A673 (cell line): ENCODE measurements at regions of chr18 and their contacts with region 1.

Region 1: DNA sequence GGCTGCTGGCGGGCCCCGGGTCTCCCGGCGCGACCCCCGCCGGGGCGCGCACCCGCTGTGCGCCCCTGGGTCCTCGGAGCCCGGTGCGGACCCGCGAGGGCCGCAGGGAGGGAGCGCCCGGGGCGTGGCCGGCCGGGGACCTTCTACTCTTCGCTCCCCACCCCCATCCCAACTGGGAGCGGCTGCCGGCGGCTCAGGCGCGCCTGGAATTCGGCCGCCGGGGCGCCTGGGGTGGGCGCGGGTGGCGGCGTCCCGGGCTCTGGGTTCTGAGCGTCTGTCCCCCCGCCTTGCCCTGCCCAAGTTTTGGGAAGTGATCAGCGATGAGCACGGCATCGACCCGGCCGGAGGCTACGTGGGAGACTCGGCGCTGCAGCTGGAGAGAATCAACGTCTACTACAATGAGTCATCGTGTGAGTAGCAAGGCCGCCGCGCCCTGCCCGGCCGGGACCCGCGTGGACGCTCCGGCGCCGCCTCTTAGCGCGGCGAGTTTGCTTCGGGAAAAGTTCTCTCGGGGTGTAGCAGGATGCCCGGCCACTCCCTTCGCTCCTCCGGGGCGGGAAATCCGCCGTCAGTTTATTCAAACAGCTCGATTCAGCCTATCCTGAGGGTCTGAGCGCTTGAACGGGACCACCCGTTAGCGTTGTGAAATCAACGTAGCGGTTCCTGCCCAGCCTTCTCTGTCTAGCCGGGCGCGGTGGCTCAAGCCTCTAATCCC is 502 bp downstream of the TUBB6 start:
- DNase-seq: peak; percentile 86
- H3K4me3 ChIP-seq: peak overlapping the region; percentile 97
- H3K27ac ChIP-seq: peak overlapping the region; percentile 82
- H3K4me1 ChIP-seq: peaks cover 12% of the 10 kb centered on the region
- H3K27me3 ChIP-seq: no peaks in the 10 kb centered on the region
- CTCF ChIP-seq: no peak

Region 2: DNA sequence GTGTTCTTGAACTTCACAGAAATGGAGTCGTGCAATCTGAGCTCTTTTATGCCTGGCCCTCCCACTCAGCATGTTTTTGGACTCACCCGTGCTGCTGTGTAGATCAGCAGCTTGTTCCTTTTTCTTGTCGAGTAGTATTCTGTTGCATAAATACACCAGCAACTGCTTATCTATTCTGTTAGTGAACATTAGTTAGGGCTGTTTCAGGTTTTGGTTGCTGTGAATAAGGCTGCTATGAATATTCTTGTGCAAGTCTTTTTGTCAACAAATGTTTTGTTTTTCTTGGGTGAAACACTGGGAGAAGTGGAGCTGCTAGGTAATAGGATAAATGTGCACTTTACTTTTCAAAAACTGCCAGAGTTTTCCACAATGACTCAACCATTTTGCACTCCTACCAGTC is 69.7 kb before region 1 on chr18:
- CTCF ChIA-PET with region 1: no interaction called
- POLR2A ChIA-PET with region 1: no interaction called
- intact Hi-C with region 1: no loop called
- DNase-seq: no peak
- H3K4me3 ChIP-seq: no peak overlapping the region
- H3K27ac ChIP-seq: no peak overlapping the region
- H3K4me1 ChIP-seq: no peaks in the 10 kb centered on the region
- H3K27me3 ChIP-seq: peaks cover 13% of the 10 kb centered on the region
- CTCF ChIP-seq: no peak

Region 3: GRCh38 chr18:12255626-12256026 is 52.9 kb before region 1 on chr18:
- CTCF ChIA-PET with region 1: no interaction called
- POLR2A ChIA-PET with region 1: no interaction called
- intact Hi-C with region 1: loop called (anchors 5 kb)
- DNase-seq: no peak
- H3K4me3 ChIP-seq: no peak overlapping the region
- H3K27ac ChIP-seq: no peak overlapping the region
- H3K4me1 ChIP-seq: peaks cover 9% of the 10 kb centered on the region
- H3K27me3 ChIP-seq: peaks cover 49% of the 10 kb centered on the region
- CTCF ChIP-seq: no peak

Region 4: DNA sequence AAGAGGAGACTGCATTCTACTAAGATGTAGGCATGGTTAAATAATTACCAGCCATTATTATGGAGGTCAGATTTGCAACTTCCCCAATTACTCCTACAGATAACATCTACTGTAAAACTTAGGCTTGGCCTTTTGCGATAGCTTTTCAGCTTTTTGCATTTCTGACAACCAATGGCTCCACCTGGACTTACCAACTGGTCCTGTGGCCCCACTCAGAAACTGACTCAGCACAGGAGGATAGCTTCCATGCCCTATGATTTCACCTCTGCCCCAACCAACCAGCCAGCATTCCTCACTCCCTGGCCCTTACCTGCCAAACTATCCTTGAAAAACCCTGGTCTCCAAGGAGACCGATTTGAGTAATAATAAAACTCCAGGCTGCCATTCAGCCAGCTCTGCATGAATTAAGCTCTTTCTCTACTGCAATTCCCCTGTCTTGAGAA is 27.6 kb after region 1 on chr18:
- CTCF ChIA-PET with region 1: no interaction called
- POLR2A ChIA-PET with region 1: no interaction called
- intact Hi-C with region 1: no loop called
- DNase-seq: no peak
- H3K4me3 ChIP-seq: no peak overlapping the region
- H3K27ac ChIP-seq: no peak overlapping the region
- H3K4me1 ChIP-seq: peaks cover 25% of the 10 kb centered on the region
- H3K27me3 ChIP-seq: no peaks in the 10 kb centered on the region
- CTCF ChIP-seq: no peak